Sciatic nerve (tissue), 2 donors: ENCODE measurements at regions of chr16 and their contacts with region 1.

Region 1: DNA sequence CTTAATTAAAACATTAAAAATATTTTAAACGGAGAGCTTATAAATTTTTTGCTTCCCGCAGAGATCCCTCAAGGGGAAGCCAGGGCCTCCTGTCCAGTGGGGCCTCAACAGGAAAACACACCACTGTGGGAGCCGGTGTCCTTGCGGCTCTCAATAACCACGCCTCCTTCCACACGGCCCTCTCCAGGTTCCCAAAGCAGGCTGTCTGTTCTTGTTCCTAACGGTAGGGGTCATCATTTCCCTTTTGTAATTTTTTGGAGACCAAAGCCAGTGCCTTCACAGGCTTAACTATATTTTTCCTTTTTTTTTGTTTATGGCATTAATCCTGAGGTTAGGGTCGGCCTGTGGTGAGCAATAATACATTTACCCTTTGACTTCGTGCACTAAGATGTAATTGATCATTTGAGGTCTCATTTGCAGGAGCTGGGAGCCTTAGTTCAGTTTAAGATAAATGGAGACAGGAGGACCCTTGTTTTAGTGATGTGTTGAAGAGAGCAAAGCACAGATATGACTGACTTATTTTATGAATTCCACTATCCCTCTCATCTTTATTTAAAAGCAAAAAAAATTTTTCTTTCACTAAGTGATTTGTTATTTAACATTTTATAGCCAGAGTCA is 77.5 kb upstream of the N4BP1 start:
- DNase-seq: no peak
- ATAC-seq: no peak

Region 2: GRCh38 chr16:47848421-47849109 is 839.0 kb before region 1 on chr16:
- intact Hi-C with region 1: loop called (anchors 5 kb)
- DNase-seq: no peak
- ATAC-seq: no peak